Activated CD8-positive, alpha-beta memory T cell treated with anti-CD3 and anti-CD28 coated beads, Interleukin-2, amount 10 ng/mL, durations not matched to agents 7 days and 5 days (primary cell): ENCODE measurements at regions of chr16 and their contacts with region 1.

Region 1: DNA sequence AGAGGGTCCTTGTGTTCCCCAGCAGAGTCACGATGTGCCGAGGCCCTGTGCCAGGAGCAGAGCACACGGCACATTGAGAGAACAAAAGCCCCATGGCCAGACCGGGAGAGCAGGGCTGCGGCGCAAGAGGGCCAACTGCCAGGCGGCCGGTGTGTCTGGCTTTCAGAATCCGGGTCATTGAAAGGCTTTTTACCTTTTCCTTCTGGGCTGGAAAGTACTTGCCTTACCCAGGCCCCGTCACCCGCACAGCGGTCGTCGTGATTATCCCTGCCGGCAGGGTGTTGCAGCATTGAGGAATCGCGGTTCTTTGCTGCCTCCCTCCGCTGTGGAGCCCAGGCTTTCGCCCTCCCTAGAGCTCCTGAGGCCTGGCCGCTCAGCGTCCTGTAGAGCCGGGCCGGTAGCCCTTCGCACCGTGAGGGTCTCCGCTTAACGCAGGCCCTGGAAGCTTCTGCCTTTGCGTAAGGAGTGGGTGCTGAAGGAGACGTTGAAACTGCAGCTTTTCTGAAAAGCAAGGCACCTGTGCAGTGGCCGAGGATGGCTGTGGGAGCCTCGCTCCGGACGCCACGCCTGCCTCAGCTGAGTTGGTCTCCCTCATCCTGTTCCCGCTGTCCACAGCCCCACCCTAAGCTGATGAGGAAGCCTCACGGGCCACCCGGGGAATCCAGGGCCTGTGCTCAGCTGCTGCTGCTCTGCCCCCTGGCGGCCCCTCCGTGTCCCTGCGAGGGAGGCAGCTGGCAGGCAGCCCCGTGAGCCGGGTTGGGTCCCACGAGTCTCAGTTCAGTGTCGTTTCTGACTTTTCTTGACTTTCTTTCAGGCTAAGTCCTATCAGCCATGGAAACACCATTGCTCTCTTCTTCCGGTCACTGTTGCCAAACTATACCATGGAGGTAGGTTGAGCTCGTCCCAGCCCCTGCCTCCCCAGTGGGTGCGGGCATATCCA is 8.6 kb upstream of the MC1R start:
- DNase-seq: peak; percentile 78
- ATAC-seq: peak; percentile 87
- H3K4me3 Mint-ChIP-seq: no peak overlapping the region
- H3K27ac Mint-ChIP-seq: no peak overlapping the region
- H3K4me1 Mint-ChIP-seq: peaks cover 10% of the 10 kb centered on the region
- H3K27me3 Mint-ChIP-seq: no peaks in the 10 kb centered on the region

Region 2: GRCh38 chr16:89828779-89829639 is 81.0 kb before region 1 on chr16:
- CTCF ChIA-PET with region 1: no interaction called
- DNase-seq: no peak
- ATAC-seq: no peak
- H3K4me3 Mint-ChIP-seq: peak overlapping the region; percentile 8
- H3K27ac Mint-ChIP-seq: no peak overlapping the region
- H3K4me1 Mint-ChIP-seq: peaks cover 5% of the 10 kb centered on the region
- H3K27me3 Mint-ChIP-seq: peaks cover 44% of the 10 kb centered on the region

Region 3: DNA sequence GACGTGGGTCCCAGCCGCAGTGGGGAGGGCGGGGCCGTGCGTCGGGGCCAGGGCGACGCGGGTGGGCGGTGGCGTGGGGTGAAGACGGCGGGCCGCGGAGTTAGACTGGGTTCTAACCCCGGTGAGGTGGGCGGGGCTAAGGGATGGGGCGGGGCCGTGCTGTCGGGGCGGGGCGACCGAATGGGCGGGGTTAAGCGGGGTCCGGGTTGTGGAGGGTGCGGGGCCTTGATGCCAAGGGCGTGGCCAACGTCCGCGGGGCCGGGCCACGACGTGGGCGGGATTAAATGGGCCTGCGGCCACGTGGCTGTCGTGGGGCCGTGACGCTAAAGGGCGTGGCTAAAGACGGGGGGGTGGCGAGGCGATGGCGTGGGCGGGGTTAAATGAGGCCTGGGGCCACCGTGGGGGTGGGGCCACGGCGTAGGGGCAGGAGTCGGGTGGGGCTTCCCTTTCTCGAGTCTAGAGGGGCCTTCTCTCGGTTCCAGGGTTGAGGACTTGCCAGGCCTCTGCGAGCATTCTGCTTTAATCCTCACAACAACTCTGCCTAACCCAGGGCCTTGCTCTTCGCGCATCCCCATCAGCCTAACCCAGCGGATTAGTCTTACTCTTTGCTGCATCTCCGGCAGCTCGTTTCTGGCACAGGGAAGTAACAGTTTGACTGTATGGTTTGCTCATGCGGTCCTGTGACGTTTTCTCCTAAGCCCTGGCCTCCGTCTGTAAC is 35.9 kb before region 1 on chr16:
- CTCF ChIA-PET with region 1: interaction called, 12 read pairs
- DNase-seq: peak; percentile 96
- ATAC-seq: peak; percentile 74
- H3K4me3 Mint-ChIP-seq: peak overlapping the region; percentile 83
- H3K27ac Mint-ChIP-seq: peak overlapping the region; percentile 98
- H3K4me1 Mint-ChIP-seq: peaks cover 21% of the 10 kb centered on the region
- H3K27me3 Mint-ChIP-seq: no peaks in the 10 kb centered on the region

Region 4: GRCh38 chr16:89922884-89923690 is 13.0 kb after region 1 on chr16 and contains the start of gene TUBB3:
- CTCF ChIA-PET with region 1: interaction called, 18 read pairs
- DNase-seq: peak; percentile 77
- ATAC-seq: peak; percentile 53
- H3K4me3 Mint-ChIP-seq: peak within 1 kb of the TSS; percentile 74
- H3K27ac Mint-ChIP-seq: peak within 1 kb of the TSS; percentile 80
- H3K4me1 Mint-ChIP-seq: peaks cover 46% of the 10 kb centered on the region
- H3K27me3 Mint-ChIP-seq: peaks cover 45% of the 10 kb centered on the region
- total RNA-seq, gene TUBB3: 3.6 to 5.0 TPM

Region 5: GRCh38 chr16:89934611-89935553 is 24.8 kb after region 1 on chr16:
- CTCF ChIA-PET with region 1: no interaction called
- DNase-seq: no peak
- ATAC-seq: no peak
- H3K4me3 Mint-ChIP-seq: no peak overlapping the region
- H3K27ac Mint-ChIP-seq: no peak overlapping the region
- H3K4me1 Mint-ChIP-seq: no peaks in the 10 kb centered on the region
- H3K27me3 Mint-ChIP-seq: peaks cover 9% of the 10 kb centered on the region